ENCODE measurements at regions of chr10 and their contacts with region 1.

Region 1: DNA sequence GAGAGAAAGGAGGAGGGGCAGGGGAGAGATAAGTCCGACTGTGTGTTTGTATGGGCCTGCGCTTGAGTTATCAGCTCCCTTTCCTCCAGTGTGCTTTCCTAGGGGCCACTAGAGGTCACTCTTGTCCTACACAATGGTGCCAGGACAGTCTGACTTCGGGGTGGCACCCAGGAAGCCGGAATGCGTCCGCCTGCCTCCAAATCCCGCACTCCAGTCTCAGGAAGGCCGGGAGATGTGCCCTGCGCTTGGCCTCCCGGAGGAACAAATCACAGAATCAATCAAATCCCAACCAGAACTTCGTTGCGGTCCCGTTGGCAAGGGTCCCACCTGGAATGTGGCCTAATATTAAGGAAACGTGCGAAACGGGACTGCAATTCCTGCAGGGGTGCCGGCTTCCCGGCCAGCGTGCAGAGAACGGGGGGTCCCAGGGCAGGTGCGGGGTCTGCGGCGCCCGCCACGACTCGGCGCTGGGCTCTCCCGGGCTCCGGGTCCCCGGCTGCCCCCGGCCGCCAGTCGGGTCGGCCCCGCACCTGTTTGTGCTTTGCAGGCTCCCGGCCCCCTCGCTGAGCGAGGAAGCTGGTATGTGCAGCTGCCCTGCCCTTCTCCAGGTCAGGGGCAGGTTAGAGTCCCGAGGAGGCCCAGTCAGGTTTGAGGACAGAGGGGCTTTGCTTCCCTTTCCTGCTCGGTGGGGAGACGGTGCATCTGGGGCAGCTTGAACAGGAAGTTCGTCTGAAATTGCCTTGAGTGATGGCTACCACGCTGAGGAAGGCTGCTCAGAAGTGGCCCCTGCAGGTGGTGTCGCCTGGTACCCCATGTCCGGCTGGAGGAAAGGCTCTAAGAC is 21.0 kb upstream of the HPS1 start:
- DNase-seq: peak; percentile 54 to 95 (median 74)

Region 2: DNA sequence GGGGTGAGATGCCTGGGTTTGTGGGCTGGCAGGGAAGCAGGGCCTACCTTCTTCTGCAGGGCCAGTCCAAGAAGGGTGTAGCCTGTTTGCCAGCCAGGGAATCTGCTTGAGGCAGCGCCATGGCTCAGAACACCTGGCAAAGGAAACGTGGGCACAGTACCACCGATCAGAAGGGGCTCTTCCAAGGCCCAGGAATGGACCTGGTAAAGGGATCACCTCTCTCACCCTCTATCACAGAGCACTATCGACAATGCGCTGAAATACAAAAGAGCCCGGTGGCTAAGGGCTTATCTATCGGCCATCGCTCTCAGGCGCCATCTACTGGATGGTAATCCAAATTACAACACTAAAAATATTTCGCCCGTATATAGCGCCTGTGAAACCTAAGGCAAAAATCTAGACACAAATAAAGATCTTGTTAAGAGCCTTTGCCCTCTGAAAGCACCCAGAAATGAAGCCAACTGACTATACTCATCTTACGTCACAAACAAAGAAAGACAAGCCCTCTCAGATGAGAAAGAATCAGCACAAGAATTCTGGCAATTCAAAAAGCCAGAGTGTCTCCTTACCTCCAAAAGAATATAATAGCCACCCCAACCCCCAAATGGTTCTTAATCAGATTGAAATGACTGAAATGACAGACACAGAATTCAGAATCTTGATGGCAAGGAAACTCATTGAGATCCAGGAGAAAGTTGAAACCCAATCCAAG is 196.8 kb after region 1 on chr10:
- intact Hi-C with region 1: loop called (anchors 10 kb)
- DNase-seq: no peak

Region 3: DNA sequence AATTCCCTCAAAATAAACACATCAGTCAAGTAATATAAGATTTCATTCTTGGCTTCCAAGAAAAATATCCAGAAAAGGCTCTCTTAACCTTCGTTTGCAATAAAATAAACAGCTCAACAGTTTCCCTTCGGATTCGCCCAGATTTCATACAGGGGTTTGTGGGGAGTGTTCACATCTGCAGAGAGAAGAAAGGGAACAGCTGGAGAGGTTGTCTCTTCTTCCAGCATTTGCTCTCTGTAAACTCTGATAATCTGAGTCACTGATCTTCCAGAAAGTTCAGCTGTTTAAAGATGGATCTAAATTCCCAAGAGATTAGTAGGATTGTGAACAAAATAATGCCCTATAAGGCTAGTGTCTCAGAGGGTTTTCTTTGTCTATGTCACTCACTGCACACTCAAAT is 490.1 kb after region 1 on chr10:
- intact Hi-C with region 1: no loop called
- DNase-seq: no peak

Region 4: DNA sequence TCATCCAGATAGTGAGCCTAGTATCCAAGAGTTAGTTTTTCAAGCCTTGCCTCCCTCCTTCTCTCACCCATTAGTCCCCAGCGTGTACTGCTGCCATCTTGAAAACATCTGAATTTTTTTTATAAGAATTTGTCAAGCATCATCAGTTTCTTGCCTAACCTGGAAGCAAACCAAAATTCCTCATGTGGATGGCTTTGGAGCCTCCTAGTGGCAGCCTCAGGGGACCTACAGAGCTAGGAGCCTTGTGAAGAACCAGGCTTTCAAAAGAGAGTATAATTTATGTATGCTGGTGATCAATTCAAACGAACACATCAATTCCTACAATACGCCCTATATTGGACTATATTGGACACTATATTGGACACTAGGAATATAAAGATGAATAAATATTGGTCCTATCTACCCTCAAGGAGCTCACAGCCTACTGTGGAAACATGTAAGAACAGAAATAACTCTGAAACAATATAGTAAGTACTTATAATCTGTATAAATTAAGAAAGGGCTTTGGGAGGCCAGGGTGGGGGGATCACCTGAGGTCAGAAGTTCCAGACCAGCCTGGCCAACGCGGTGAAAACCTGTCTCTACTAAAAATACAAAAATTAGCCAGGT is 704.5 kb after region 1 on chr10:
- intact Hi-C with region 1: loop called (anchors 2 kb)
- DNase-seq: peak in 6 of 10 donors; percentile 16 to 83 (median 37)

Region 5: DNA sequence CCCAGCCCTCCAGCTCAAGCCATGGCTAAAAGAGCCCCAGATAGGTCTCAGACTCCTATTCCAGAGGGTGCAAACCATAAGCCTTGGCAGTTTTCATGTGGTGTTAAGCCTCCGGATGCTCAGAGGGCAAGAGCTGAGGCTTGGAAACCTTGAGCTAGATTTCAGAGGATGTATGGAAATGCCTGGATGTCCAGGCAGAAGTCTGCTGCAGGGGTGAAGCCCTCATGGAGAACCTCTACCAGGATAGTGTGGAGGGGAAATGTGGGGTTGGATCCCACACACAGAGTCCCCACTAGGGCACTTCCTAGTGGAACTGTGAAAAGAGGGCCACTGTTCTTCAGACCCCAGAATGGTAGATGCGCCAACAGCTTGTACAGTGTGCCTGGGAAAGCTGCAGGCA is 781.1 kb after region 1 on chr10:
- intact Hi-C with region 1: loop called (anchors 1 kb)
- DNase-seq: no peak

Measured in posterior cingulate gyrus (tissue), 11 donors.